ENCODE measurements at regions of chr15 and their contacts with region 1.

Region 1: DNA sequence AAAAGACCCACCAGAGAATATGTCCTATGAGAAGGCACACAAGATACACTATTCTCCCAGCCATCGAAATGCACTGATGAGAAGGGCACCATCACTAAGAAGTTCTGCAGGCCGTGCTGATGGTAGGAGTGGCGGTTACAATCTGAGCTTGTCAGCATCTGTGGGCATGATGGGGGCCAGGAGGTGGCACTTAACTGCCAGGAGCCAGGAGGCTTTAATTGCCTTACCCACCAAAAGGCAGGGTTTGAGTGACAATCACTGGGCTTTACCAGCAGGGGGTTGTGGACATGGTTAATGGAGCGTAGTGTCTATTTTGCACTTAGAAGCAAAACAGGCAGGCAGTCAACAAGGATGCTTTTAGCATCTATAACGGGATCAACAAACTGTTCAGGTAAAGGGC is 16.0 kb upstream of the SQOR start:
- DNase-seq: no peak
- ATAC-seq: no peak; the same call in 1 of the 2 replicates
- H3K4me3 ChIP-seq: no peak overlapping the region
- H3K27ac ChIP-seq: no peak overlapping the region
- H3K4me1 ChIP-seq: no peaks in the 10 kb centered on the region
- H3K27me3 ChIP-seq: no peaks in the 10 kb centered on the region
- CTCF ChIP-seq: peak; percentile 12; the same call in 1 of the 2 replicates

Region 2: DNA sequence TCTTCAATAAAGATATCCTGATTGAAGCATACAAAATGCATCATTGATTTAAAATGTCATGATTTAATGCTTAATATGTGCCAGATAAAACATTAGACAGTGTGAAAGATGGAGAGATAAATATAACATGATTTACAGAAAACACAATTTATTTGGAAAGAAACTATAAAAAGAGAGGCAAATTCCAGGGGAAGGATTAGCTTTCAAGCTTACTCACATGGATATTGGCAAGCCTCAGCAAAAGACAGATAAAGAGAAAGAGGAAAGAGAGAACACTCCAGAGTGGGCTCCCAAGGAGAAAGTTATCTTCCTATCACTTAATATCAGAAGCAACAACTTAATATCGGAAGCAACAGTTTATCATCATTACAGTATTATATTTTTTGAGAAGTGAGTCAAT is 1052.5 kb after region 1 on chr15:
- CTCF ChIA-PET with region 1: no interaction called
- POLR2A ChIA-PET with region 1: interaction called, 17 read pairs
- in situ Hi-C with region 1: no loop called
- intact Hi-C with region 1: no loop called
- DNase-seq: no peak
- ATAC-seq: no peak
- H3K4me3 ChIP-seq: no peak overlapping the region
- H3K27ac ChIP-seq: no peak overlapping the region
- H3K4me1 ChIP-seq: no peaks in the 10 kb centered on the region
- H3K27me3 ChIP-seq: no peaks in the 10 kb centered on the region
- CTCF ChIP-seq: no peak